WTC11 (cell line): ENCODE measurements at regions of chr1 and their contacts with region 1.

Region 1: GRCh38 chr1:88983791-88984559 is 8.5 kb downstream of the KYAT3 start:
- DNase-seq: no peak
- ATAC-seq: peak; percentile 77
- H3K4me3 Mint-ChIP-seq: no peak overlapping the region
- H3K27ac Mint-ChIP-seq: peak overlapping the region; percentile 75
- H3K4me1 Mint-ChIP-seq: peaks cover 19% of the 10 kb centered on the region
- H3K27me3 Mint-ChIP-seq: no peaks in the 10 kb centered on the region
- CTCF ChIP-seq: peak; percentile 55

Region 2: GRCh38 chr1:88935522-88936222 is 48.3 kb before region 1 on chr1:
- CTCF ChIA-PET with region 1: no interaction called
- POLR2A ChIA-PET with region 1: no interaction called
- DNase-seq: no peak
- ATAC-seq: no peak
- H3K4me3 Mint-ChIP-seq: no peak overlapping the region
- H3K27ac Mint-ChIP-seq: no peak overlapping the region
- H3K4me1 Mint-ChIP-seq: no peaks in the 10 kb centered on the region
- H3K27me3 Mint-ChIP-seq: no peaks in the 10 kb centered on the region
- CTCF ChIP-seq: peak; percentile 55; the same call in 1 of the 2 replicates

Region 3: GRCh38 chr1:88973520-88974137 is 10.3 kb before region 1 on chr1:
- CTCF ChIA-PET with region 1: interaction called, 25 read pairs
- POLR2A ChIA-PET with region 1: no interaction called
- DNase-seq: no peak
- ATAC-seq: peak; percentile 44
- H3K4me3 Mint-ChIP-seq: no peak overlapping the region
- H3K27ac Mint-ChIP-seq: no peak overlapping the region
- H3K4me1 Mint-ChIP-seq: no peaks in the 10 kb centered on the region
- H3K27me3 Mint-ChIP-seq: no peaks in the 10 kb centered on the region
- CTCF ChIP-seq: peak; percentile 44